H1 (cell line): ENCODE measurements at regions of chr2 and their contacts with region 1.

Region 1: DNA sequence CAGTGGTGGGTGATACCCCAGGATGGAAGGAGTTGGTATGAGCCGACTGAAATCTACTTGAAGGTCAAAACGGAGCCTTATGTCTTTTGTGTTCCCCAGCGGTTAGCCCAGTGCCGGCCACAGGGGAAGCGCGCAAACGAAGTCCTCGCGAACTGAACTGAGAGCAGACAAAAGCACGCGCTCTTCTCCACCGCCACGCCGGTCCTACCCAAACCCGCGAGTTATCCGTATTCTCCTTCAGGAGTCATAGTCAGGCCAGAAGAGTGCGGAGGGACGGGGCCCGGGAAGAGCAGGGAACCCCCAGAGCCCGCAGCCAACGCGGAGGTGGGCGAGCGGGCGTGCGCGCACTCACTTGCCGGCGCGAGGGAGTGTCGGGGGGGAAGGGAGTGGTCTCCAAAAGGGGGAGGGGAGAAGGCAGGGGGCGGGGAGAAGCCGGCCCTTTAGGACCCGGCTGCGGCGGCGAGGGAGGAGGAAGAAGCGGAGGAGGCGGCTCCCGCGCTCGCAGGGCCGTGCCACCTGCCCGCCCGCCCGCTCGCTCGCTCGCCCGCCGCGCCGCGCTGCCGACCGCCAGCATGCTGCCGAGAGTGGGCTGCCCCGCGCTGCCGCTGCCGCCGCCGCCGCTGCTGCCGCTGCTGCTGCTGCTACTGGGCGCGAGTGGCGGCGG is at the start of gene IGFBP2:
- DNase-seq: peak in 1 of 2 experiments; percentile 83
- H3K4me3 ChIP-seq: peak within 1 kb of the TSS; percentile 71 to 93 (median 86)
- H3K27ac ChIP-seq: peak within 1 kb of the TSS; percentile 35; the same call in 1 of the 2 replicates
- H3K4me1 ChIP-seq: peaks cover 14 to 25% (median 18%) of the 10 kb centered on the region in 4 experiments
- H3K27me3 ChIP-seq: peaks cover 0 to 8% (median 6%) of the 10 kb centered on the region in 4 experiments; a peak in 3 of 7 replicates
- CTCF ChIP-seq: 0 out of 4 replicates have a peak, but pooled peaks of 1 of the 3 experiments have one; percentile 6
- EP300 ChIP-seq: no peak
- POLR2A ChIP-seq: peak; percentile 44 to 67
- RAD21 ChIP-seq: peak in 1 of 2 experiments; percentile 10; a peak in 1 of 4 replicates
- total RNA-seq, gene IGFBP2: 322 and 326 TPM in 2 replicates

Region 2: DNA sequence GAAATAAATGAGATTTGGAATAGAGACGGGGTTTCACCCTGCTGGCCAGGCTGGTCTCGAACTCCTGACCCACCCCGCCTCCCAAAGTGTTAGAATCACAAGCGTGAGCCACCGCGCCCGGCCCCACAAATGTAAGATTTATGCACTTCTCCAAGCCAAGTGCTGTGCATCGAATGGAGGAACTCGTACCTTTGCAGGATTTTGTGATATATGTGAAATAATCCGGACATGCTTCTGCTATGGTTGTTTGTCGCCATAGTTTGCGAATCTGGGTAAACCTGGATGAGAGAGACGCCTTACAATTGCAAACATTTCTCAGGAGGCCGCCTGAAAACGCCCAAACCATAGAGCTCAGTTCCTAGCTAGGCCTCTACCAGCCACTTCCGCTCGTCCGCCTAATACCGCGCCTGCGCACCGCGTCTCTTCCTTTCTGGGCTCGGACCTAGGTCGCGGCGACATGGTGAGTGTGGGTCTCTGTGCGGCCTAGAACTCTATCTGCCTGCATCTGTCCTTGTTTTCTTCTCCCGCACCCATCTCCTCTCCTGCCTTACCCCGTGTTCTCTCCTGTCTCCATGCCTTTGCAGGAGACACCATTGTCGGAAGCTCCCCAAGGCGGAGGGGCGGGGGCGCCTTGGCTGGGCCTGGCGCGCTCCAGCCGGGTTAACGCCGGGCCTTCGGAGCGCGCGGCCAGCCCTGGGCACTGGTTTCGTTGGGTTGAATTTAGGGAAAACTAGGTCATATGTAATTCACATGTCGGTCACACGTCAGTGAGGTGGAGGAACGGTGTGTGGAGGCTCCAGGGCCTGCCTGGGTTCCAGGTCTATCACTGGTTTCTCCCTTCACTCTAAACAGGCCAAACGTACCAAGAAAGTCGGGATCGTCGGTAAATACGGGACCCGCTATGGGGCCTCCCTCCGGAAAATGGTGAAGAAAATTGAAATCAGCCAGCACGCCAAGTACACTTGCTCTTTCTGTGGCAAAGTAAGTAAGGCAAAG is 134.4 kb before region 1 on chr2 and contains the start of gene RPL37A:
- CTCF ChIA-PET with region 1: no interaction called
- POLR2A ChIA-PET with region 1: interaction called, 15 read pairs
- DNase-seq: peak; percentile 75 to 90
- H3K4me3 ChIP-seq: peak within 1 kb of the TSS; percentile 86 to 97 (median 92)
- H3K27ac ChIP-seq: peak within 1 kb of the TSS; percentile 86
- H3K4me1 ChIP-seq: peaks cover 2 to 12% (median 4%) of the 10 kb centered on the region in 4 experiments; a peak in 6 of 7 replicates
- H3K27me3 ChIP-seq: no peaks in the 10 kb centered on the region
- CTCF ChIP-seq: no peak
- EP300 ChIP-seq: no peak
- POLR2A ChIP-seq: peak; percentile 98 to 100
- RAD21 ChIP-seq: no peak
- total RNA-seq, gene RPL37A: 3,180 and 3,341 TPM in 2 replicates

Region 3: DNA sequence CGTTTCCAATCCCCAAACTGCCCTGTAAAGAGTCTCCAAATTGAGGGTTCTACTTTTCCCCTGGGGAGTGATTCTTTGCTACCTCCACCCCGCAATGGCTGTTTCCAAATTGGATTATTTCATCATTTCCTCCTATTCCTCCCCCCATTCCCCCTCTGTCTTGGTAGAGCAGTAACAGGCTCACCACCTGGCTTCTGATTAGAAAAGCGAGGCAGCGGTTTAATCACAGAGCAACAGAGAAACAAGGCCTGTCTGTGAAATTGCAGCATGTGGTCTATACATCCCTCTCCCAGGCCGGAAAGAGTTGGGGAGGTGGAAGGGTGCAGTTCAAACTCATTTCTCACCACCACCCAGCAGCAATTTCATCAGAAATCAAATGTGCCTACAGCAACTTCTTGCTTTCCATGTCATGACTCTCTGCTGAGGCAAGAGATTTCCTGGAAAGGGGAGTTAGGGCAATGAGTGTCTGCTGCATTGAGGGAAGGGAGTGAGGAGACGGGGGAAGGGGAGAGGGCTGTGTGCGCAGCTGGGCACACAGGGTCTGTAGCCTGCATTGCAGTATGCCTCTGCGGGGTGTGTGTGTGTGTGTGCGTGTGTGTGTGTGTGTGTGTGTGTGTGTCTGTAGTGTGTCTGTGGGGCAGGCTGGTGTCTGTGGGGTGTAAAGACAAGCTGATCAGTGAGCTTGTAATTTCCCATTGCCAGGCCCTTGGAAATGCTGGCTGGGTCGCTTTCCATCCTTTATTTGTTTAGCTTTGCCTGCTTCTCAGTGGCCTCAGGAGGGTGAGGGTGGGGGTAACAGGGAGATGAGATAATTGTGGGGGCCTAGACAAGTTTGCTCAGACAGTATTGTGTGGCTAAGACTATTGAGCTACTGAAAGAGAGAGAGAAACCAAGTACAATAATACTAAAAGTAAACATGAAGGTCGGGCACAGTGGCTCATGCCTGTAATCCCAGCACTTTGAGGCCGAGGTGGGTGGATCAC is 13.4 kb before region 1 on chr2:
- CTCF ChIA-PET with region 1: interaction called, 8 read pairs
- POLR2A ChIA-PET with region 1: interaction called, 32 read pairs
- DNase-seq: peak in 1 of 2 experiments; percentile 57
- H3K4me3 ChIP-seq: no peak overlapping the region
- H3K27ac ChIP-seq: no peak overlapping the region; the same call in 1 of the 2 replicates
- H3K4me1 ChIP-seq: peaks cover 10 to 17% (median 14%) of the 10 kb centered on the region in 4 experiments
- H3K27me3 ChIP-seq: no peaks in the 10 kb centered on the region; a peak in 1 of 7 replicates
- CTCF ChIP-seq: no peak
- EP300 ChIP-seq: no peak
- POLR2A ChIP-seq: no peak
- RAD21 ChIP-seq: no peak